ENCODE measurements at regions of chr11 and their contacts with region 1.

Region 1: DNA sequence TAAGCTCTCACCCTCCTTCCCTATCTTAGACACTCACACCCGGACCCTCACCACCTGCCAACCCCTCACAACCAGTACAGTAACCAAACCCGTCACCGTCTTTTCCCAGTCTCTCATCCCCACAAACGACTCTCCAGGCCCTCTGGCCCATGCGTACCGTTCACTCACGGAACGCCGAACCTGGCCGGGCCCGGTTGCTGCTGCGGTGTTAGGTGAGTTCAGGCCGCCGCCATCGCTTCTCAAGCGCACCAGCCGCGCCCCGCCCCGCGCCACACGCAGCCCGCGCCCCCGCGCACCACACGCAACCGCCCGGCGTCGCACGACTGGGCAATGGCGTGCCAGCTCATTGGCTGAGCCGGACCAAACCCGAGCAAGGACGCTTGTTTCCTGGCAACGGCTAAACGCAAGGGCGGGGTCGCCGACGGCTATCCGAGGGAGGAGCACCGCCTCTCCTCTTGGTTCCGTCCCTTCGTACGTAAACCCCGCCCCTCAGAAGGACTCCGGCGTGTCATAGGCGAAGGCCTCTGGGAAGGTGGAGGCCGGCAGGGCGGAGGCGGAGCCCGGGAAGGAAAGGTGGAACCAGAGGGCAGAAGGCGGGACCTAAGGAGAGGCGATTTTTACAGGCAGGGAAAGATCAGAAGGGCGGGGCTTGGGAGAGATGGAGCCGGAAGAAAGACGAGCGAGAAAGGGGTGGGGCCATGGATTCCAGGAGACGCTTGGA is at the start of gene FHIP1B:
- DNase-seq: peak; percentile 100
- H3K4me3 ChIP-seq: peak within 1 kb of the TSS; percentile 69 to 90 (median 78)
- H3K27ac ChIP-seq: peak within 1 kb of the TSS; percentile 10
- H3K4me1 ChIP-seq: peaks cover 6% of the 10 kb centered on the region
- H3K27me3 ChIP-seq: peaks cover 3 to 6% of the 10 kb centered on the region in 2 experiments
- CTCF ChIP-seq: no peak
- POLR2A ChIP-seq: no peak
- total RNA-seq, gene FHIP1B: 21.3 and 23.0 TPM in 2 replicates

Region 2: GRCh38 chr11:4607781-4608666 is 1626.5 kb before region 1 on chr11 and contains the start of gene TRIM68:
- CTCF ChIA-PET with region 1: no interaction called
- POLR2A ChIA-PET with region 1: no interaction called
- dilution Hi-C with region 1: no loop called
- intact Hi-C with region 1: loop called (anchors 10 kb)
- DNase-seq: peak; percentile 95
- H3K4me3 ChIP-seq: peak within 1 kb of the TSS; percentile 59 to 93 (median 88)
- H3K27ac ChIP-seq: peak within 1 kb of the TSS; percentile 83
- H3K4me1 ChIP-seq: peaks cover 10% of the 10 kb centered on the region
- H3K27me3 ChIP-seq: no peaks in the 10 kb centered on the region
- CTCF ChIP-seq: no peak
- POLR2A ChIP-seq: peak; percentile 81
- total RNA-seq, gene TRIM68: 10.6 and 11.3 TPM in 2 replicates

Region 3: DNA sequence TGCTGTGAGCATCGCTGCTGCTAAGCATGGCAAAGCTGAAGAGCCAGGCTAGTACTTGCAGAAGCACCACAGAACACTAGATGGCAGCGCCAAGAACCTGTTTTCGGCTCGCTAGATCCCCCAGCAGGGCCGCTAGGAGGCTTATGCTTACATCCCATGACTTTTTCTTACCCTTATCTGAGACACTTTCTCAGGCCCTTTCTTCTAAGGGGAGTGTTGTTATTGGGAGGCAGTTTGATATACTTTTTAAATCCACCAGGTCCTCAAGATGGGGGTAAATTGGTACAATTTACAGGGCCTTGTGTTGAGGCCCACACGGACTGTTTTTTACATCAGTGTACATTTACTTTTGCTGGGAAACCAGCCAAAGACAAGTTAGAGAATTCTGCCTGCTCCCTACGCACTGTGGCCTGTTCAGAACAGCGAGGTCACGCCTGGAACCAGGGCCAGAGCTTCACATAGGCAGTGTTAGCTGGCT is 634.1 kb before region 1 on chr11:
- CTCF ChIA-PET with region 1: no interaction called
- POLR2A ChIA-PET with region 1: no interaction called
- dilution Hi-C with region 1: no loop called
- intact Hi-C with region 1: loop called (anchors 10 kb)
- DNase-seq: peak; percentile 91
- H3K4me3 ChIP-seq: no peak overlapping the region
- H3K27ac ChIP-seq: peak overlapping the region; percentile 32
- H3K4me1 ChIP-seq: peaks cover 9% of the 10 kb centered on the region
- H3K27me3 ChIP-seq: no peaks in the 10 kb centered on the region
- CTCF ChIP-seq: peak; percentile 79 to 94
- POLR2A ChIP-seq: no peak

Region 4: GRCh38 chr11:6219359-6219758 is 15.2 kb before region 1 on chr11:
- CTCF ChIA-PET with region 1: interaction called, 3 read pairs
- POLR2A ChIA-PET with region 1: no interaction called
- dilution Hi-C with region 1: no loop called
- intact Hi-C with region 1: loop called (anchors 1 kb)
- DNase-seq: peak; percentile 65
- H3K4me3 ChIP-seq: no peak overlapping the region
- H3K27ac ChIP-seq: no peak overlapping the region
- H3K4me1 ChIP-seq: peaks cover 11% of the 10 kb centered on the region
- H3K27me3 ChIP-seq: no peaks in the 10 kb centered on the region
- CTCF ChIP-seq: no peak
- POLR2A ChIP-seq: no peak

Region 5: GRCh38 chr11:6251120-6251733 is 16.7 kb after region 1 on chr11:
- CTCF ChIA-PET with region 1: interaction called, 40 read pairs
- POLR2A ChIA-PET with region 1: no interaction called
- dilution Hi-C with region 1: no loop called
- intact Hi-C with region 1: loop called (anchors 1 kb)
- DNase-seq: peak; percentile 47
- H3K4me3 ChIP-seq: no peak overlapping the region
- H3K27ac ChIP-seq: no peak overlapping the region
- H3K4me1 ChIP-seq: peaks cover 5% of the 10 kb centered on the region
- H3K27me3 ChIP-seq: peaks cover 19 to 28% of the 10 kb centered on the region in 2 experiments
- CTCF ChIP-seq: peak; percentile 76 to 78
- POLR2A ChIP-seq: no peak

Region 6: GRCh38 chr11:6285019-6285418 is 50.5 kb after region 1 on chr11:
- CTCF ChIA-PET with region 1: interaction called, 3 read pairs
- POLR2A ChIA-PET with region 1: no interaction called
- dilution Hi-C with region 1: no loop called
- intact Hi-C with region 1: loop called (anchors 1 kb)
- DNase-seq: no peak
- H3K4me3 ChIP-seq: no peak overlapping the region
- H3K27ac ChIP-seq: no peak overlapping the region
- H3K4me1 ChIP-seq: no peaks in the 10 kb centered on the region
- H3K27me3 ChIP-seq: peaks cover 22 to 34% of the 10 kb centered on the region in 2 experiments
- CTCF ChIP-seq: no peak
- POLR2A ChIP-seq: no peak

Region 7: DNA sequence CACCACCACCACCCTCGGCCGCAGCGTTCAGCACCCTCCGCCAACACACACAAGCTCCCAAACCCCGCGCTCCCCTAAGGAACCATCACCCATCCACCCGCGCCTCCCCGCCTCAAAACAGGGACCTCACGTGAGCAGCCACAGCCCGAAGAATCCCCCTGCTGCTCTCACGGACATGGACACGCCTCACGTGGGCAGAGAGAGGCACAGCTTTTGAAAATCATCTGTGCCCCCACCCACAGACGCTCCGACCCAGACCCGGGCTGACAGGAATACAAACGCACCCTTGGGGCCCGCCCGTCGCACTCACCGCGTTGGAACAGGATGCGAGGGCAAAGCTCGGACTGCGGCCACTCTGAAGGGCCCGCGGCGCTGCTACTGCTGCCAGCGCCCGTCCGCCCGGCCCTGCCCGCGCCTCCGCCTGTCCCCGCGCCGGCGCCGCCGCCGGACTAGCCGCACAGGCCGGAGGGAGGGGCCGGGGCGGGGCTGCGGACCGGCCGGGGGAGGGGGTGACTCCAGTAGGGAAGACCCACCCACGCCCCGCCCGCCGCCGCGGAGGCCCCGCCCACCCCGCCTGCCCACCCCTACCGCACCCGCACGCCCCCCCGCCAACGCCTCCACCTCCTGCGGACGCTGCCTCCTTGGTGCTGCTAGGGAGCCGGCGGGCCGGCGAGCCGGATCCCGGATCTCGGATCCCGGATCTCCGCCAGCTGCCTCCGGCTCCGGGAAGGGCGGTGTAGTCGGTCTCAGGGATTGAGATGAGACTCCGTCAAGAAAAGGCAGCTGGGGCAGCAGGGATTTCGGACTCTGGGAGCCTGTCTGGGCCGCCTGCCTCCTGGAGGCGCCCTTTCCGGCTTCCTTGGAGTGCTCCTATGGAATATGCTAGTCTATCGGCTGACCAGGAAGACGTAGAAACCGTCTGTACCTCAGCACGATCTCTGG is 239.2 kb after region 1 on chr11 and contains the start of gene TRIM3:
- CTCF ChIA-PET with region 1: no interaction called
- POLR2A ChIA-PET with region 1: no interaction called
- dilution Hi-C with region 1: no loop called
- intact Hi-C with region 1: loop called (anchors 5 kb)
- DNase-seq: peak; percentile 87
- H3K4me3 ChIP-seq: peak within 1 kb of the TSS; percentile 61 to 87 (median 68)
- H3K27ac ChIP-seq: peak within 1 kb of the TSS; percentile 87
- H3K4me1 ChIP-seq: peaks cover 21% of the 10 kb centered on the region
- H3K27me3 ChIP-seq: no peaks in the 10 kb centered on the region
- CTCF ChIP-seq: peak in 1 of 2 donors; percentile 42
- POLR2A ChIP-seq: peak; percentile 95
- total RNA-seq, gene TRIM3: 25.6 and 29.2 TPM in 2 replicates